ENCODE measurements at regions of chr2 and their contacts with region 1.

Region 1: GRCh38 chr2:207529330-207530159 is at the start of gene CREB1:
- DNase-seq: peak; percentile 96
- H3K4me3 ChIP-seq: peak within 1 kb of the TSS; percentile 97
- H3K27ac ChIP-seq: peak within 1 kb of the TSS; percentile 94
- H3K4me1 ChIP-seq: peaks cover 50% of the 10 kb centered on the region
- CTCF ChIP-seq: peak; percentile 35; the same call in 1 of the 2 replicates
- total RNA-seq, gene CREB1: 40.3 and 54.3 TPM in 2 replicates

Region 2: GRCh38 chr2:207540431-207540830 is 10.9 kb after region 1 on chr2:
- CTCF ChIA-PET with region 1: interaction called, 3 read pairs
- POLR2A ChIA-PET with region 1: interaction called, 15 read pairs
- intact Hi-C with region 1: no loop called
- DNase-seq: no peak
- H3K4me3 ChIP-seq: no peak overlapping the region
- H3K27ac ChIP-seq: no peak overlapping the region
- H3K4me1 ChIP-seq: peaks cover 1% of the 10 kb centered on the region
- CTCF ChIP-seq: no peak

Region 3: DNA sequence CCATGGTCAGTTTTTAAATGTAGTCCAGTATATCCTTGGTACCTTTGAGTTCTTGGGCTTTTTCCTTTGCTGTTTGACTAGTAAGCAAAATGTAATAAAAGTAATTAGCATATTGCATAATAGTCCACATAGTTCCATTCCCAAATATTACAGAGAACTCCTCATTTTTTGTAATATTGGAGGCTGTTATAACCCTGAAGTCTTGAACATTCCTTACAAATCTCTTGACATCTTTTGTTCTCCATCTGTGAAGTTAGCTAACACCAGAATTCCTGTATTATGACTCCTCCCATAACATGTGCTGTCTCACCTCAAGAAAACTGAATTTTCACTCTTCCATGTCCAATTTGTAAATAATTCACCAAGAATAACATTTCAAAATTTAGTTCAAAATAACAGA is 17.3 kb after region 1 on chr2:
- CTCF ChIA-PET with region 1: no interaction called
- POLR2A ChIA-PET with region 1: interaction called, 42 read pairs
- intact Hi-C with region 1: no loop called
- DNase-seq: no peak
- H3K4me3 ChIP-seq: no peak overlapping the region
- H3K27ac ChIP-seq: no peak overlapping the region
- H3K4me1 ChIP-seq: no peaks in the 10 kb centered on the region
- CTCF ChIP-seq: no peak

Region 4: GRCh38 chr2:207584952-207585351 is 55.4 kb after region 1 on chr2:
- CTCF ChIA-PET with region 1: no interaction called
- POLR2A ChIA-PET with region 1: no interaction called
- intact Hi-C with region 1: no loop called
- DNase-seq: no peak
- H3K4me3 ChIP-seq: no peak overlapping the region
- H3K27ac ChIP-seq: no peak overlapping the region
- H3K4me1 ChIP-seq: no peaks in the 10 kb centered on the region
- CTCF ChIP-seq: no peak

Region 5: DNA sequence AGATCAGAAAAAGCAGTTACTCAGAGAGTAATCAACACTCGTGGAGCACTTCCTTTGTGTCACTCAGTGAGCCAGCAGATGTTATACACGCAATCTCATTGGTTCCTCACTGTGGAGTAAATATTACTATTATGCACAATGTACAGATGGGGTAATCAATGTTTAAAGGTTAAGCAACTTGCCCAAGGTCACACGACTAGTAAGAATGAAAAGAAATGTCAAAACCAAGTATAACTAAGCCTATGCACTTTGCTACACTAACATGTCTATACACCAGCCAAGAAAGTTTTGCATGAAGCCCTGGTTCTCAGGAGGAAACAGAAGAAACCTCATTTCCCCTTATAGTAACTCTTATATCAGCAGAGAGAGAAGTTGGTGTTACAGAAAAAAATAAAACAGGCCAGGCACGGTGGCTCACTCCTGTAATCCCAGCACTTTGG is 90.2 kb after region 1 on chr2:
- CTCF ChIA-PET with region 1: no interaction called
- POLR2A ChIA-PET with region 1: interaction called, 13 read pairs
- intact Hi-C with region 1: no loop called
- DNase-seq: peak; percentile 75
- H3K4me3 ChIP-seq: peak overlapping the region; percentile 43
- H3K27ac ChIP-seq: peak overlapping the region; percentile 66
- H3K4me1 ChIP-seq: peaks cover 54% of the 10 kb centered on the region
- CTCF ChIP-seq: no peak

Region 6: GRCh38 chr2:208265801-208266552 is 736.4 kb after region 1 on chr2 and contains the start of gene PIKFYVE:
- CTCF ChIA-PET with region 1: no interaction called
- POLR2A ChIA-PET with region 1: interaction called, 5 read pairs
- intact Hi-C with region 1: loop called (anchors 5 kb)
- DNase-seq: peak; percentile 98
- H3K4me3 ChIP-seq: peak within 1 kb of the TSS; percentile 74
- H3K27ac ChIP-seq: peak within 1 kb of the TSS; percentile 93
- H3K4me1 ChIP-seq: peaks cover 37% of the 10 kb centered on the region
- CTCF ChIP-seq: no peak
- total RNA-seq, gene PIKFYVE: 29.2 and 29.7 TPM in 2 replicates